Activated naive CD4-positive, alpha-beta T cell treated with anti-CD3 and anti-CD28 coated beads, Interleukin-2, amount 10 ng/mL, durations not matched to agents 7 days and 5 days (primary cell): ENCODE measurements at regions of chr7 and their contacts with region 1.

Region 1: GRCh38 chr7:55255496-55256435 is 109.4 kb upstream of the LANCL2 start:
- DNase-seq: peak; percentile 76
- H3K4me3 Mint-ChIP-seq: peak overlapping the region; percentile 65
- H3K27ac Mint-ChIP-seq: no peak overlapping the region
- H3K4me1 Mint-ChIP-seq: peaks cover 10% of the 10 kb centered on the region
- H3K27me3 Mint-ChIP-seq: peaks cover 48% of the 10 kb centered on the region

Region 2: GRCh38 chr7:54773472-54774399 is 482.0 kb before region 1 on chr7:
- CTCF ChIA-PET with region 1: interaction called, 85 read pairs
- DNase-seq: peak; percentile 78
- H3K4me3 Mint-ChIP-seq: peak overlapping the region; percentile 70
- H3K27ac Mint-ChIP-seq: no peak overlapping the region
- H3K4me1 Mint-ChIP-seq: peaks cover 7% of the 10 kb centered on the region
- H3K27me3 Mint-ChIP-seq: peaks cover 23% of the 10 kb centered on the region

Region 3: DNA sequence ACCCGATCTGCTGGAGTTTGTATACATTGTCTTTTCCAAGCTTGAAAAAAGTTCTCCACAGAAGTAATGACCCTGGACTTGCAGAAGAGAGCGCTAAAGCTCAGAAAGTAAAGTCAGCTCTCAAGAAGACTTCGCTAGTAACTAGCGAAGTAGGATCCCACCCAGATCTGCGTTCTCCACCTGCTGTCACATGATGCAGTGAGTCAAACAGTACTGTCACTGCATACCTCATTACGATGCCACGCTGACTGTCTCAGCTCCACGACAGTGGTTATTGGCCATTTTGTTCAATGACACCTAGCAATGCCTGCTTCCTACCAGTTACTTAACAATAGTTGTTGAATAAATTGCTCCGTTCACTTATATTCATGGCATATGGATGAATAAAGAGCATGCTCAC is 467.1 kb before region 1 on chr7:
- CTCF ChIA-PET with region 1: interaction called, 30 read pairs
- DNase-seq: peak; percentile 26
- H3K4me3 Mint-ChIP-seq: no peak overlapping the region
- H3K27ac Mint-ChIP-seq: no peak overlapping the region
- H3K4me1 Mint-ChIP-seq: no peaks in the 10 kb centered on the region
- H3K27me3 Mint-ChIP-seq: peaks cover 8% of the 10 kb centered on the region

Region 4: DNA sequence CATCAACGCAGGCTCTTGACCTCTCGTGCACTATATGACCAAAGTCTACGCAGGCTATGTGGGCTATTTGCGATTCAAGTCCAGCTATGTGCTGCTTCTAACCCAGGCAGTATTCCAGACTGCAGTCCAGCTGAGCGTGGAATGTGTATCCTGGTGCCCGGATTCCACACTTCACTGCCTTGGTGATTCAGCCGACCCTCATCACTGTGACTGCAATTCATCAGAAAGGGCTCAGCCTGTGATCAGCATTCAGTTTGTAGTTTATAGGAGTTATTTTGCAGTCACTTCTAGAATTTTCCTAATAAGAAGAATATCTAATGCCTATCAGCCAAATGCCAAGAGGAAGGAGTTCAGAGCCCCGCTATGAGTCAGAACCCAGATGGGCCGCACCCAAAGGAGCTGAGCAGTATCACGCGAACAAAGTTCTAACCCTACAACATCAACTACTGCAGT is 10.5 kb before region 1 on chr7:
- CTCF ChIA-PET with region 1: interaction called, 12 read pairs
- DNase-seq: no peak
- H3K4me3 Mint-ChIP-seq: no peak overlapping the region
- H3K27ac Mint-ChIP-seq: no peak overlapping the region
- H3K4me1 Mint-ChIP-seq: no peaks in the 10 kb centered on the region
- H3K27me3 Mint-ChIP-seq: peaks cover 8% of the 10 kb centered on the region

Region 5: GRCh38 chr7:55271069-55271626 is 15.4 kb after region 1 on chr7:
- CTCF ChIA-PET with region 1: interaction called, 18 read pairs
- DNase-seq: no peak
- H3K4me3 Mint-ChIP-seq: no peak overlapping the region
- H3K27ac Mint-ChIP-seq: no peak overlapping the region
- H3K4me1 Mint-ChIP-seq: no peaks in the 10 kb centered on the region
- H3K27me3 Mint-ChIP-seq: peaks cover 6% of the 10 kb centered on the region